CD4-positive, alpha-beta memory T cell (primary cell): ENCODE measurements at regions of chr14 and their contacts with region 1.

Region 1: DNA sequence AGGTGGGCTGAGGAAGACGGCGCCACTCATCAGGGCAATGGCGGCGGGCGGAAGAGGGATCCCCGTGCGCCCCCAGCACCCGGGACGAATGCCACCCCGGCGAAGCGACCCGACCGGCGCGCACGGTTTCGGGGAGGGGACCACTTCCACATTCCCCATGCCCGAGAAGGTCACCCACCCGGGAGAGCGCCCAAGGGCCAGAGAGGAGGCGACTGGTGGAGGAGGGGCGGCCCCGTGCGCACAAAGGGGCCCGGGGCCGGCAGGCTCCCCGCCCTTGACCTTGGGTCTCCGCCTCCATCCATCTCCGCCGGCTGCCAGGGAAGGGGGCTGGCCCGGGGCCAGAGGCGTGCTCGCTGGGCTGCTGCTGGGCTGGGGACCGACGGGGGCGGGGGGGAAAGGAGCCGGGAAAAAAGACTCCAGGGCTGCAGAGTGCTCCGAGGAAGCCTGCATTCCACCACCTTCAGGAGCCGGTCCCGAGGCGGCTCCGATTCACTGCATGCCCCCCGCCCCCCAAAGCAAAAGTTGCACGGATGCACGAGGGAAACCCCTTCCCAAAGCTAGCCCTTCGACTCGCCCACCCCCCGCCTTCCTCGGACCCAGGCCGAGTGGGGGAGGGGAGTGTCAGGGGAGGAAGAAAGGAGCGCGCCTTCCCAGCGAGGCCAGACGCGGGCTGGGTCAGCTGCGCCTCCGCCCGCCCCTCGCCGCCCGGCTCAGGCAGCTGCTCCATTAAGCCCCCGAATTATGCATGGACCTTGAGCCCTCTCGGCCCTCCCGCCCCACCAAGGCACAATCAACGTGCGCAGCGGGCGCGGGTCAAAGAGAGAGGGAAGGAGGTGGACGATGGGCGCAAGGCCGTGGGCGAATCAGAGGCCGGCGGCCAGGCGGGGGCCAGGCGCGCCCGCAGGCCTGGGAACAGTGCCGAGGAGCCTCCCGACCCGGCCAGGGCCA is 26.2 kb downstream of the BCL11B start:
- DNase-seq: peak in 1 of 5 donors; percentile 35
- H3K4me3 ChIP-seq: peak overlapping the region in 1 of 2 donors; percentile 60
- H3K4me3 Mint-ChIP-seq: peak overlapping the region; percentile 86 to 99 (median 90)
- H3K27ac ChIP-seq: peak overlapping the region; percentile 98
- H3K27ac Mint-ChIP-seq: peak overlapping the region; percentile 98 to 99 (median 99)
- H3K4me1 ChIP-seq: peaks cover 91% of the 10 kb centered on the region
- H3K4me1 Mint-ChIP-seq: peaks cover 63 to 89% (median 78%) of the 10 kb centered on the region in 4 donors
- H3K27me3 ChIP-seq: no peaks in the 10 kb centered on the region
- H3K27me3 Mint-ChIP-seq: no peaks in the 10 kb centered on the region

Region 2: DNA sequence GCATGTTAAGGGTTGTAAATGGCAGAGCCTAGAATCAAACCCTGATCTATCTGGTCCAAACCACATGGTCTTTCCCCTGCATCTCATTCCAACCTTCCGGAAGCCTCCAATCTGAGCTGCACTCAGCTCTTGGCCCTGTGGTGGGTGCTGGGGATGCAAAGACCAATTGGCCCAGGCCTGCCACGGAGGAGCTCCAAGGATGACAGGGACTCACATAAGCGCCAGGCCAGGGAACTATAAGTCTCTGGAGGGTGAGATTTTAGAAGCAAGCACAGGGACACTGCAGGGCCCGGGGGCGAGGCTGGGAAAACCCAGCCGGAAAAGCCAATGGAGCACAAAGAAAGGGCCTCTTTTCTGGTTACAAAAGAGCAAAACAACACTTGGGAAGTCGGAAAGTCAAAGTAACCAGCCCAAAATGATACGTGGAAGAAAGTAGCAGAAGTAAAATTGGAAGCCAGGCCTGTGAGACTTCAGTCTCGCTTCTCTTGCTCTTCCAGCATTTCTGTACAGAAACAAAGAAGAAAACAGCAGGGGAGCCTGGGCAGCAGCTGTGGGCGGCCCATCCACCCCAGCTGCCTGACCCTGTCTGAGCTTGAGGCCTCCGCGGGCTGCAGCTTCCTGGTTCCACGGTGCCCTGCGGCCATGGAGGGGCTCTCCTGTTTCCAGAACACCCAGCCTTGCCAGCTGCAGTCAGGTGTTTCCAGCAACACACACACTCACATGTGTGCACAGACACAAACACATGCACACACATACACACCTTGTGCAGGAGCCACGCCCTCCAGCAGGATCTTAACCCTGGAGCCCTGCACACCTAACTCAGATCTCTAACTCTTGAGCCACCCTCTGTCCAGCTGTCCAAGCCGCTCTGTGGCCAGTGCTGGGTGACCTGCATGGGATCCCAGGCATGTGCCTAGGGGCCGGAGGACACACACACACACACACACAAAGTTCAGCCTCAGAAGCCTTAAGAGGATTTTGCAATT is 152.0 kb before region 1 on chr14:
- CTCF ChIA-PET with region 1: no interaction called
- POLR2A ChIA-PET with region 1: no interaction called
- intact Hi-C with region 1: no loop called
- DNase-seq: no peak
- H3K4me3 ChIP-seq: no peak overlapping the region
- H3K4me3 Mint-ChIP-seq: no peak overlapping the region
- H3K27ac ChIP-seq: no peak overlapping the region
- H3K27ac Mint-ChIP-seq: no peak overlapping the region
- H3K4me1 ChIP-seq: no peaks in the 10 kb centered on the region
- H3K4me1 Mint-ChIP-seq: no peaks in the 10 kb centered on the region
- H3K27me3 ChIP-seq: no peaks in the 10 kb centered on the region
- H3K27me3 Mint-ChIP-seq: no peaks in the 10 kb centered on the region

Region 3: DNA sequence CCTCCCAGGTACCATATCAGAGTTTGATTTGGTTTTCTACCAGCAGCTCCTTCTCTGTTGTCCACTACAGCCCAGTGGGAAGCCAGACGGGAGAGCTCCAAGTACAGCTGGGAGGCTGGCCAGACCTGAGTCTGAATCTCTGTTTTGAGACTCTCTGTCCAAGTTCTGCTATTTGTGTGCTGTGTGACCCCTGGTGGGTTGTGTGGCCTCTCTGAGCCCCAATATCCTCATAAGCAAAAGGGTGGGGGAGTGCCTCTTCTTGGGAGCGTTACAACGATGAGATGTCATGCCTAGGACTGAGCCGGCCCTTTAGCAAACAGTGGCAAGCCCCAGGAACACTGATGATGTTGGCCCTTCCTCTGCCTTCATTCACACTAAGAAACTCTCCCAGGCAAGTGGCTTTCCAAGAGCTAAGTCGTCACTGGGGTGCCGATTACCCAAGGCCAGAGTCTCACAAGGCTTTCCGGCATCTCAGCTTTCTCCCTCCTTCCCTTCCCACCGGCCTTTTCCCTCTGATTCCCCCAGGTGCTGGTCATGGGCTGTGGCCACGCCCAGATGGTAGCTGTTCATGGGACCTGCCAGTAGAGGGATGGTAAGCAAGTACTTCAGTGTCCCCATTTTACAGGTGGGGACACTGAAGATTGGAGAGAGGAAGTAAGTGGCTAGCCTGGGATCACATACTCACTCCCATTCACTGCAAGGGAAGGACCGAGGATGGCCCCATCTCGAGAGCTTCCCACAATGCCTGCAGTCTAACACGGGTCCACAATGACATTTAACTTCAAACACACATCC is 21.5 kb before region 1 on chr14:
- CTCF ChIA-PET with region 1: interaction called, 16 read pairs
- POLR2A ChIA-PET with region 1: interaction called, 6,015 read pairs
- intact Hi-C with region 1: no loop called
- DNase-seq: no peak
- H3K4me3 ChIP-seq: no peak overlapping the region
- H3K4me3 Mint-ChIP-seq: peak overlapping the region; percentile 56 to 94 (median 66)
- H3K27ac ChIP-seq: peak overlapping the region; percentile 98
- H3K27ac Mint-ChIP-seq: peak overlapping the region; percentile 94 to 99 (median 99)
- H3K4me1 ChIP-seq: peaks cover 97% of the 10 kb centered on the region
- H3K4me1 Mint-ChIP-seq: peaks cover 81 to 98% (median 92%) of the 10 kb centered on the region in 4 donors
- H3K27me3 ChIP-seq: no peaks in the 10 kb centered on the region
- H3K27me3 Mint-ChIP-seq: no peaks in the 10 kb centered on the region

Region 4: GRCh38 chr14:99230208-99231151 is 15.4 kb before region 1 on chr14:
- CTCF ChIA-PET with region 1: interaction called, 39 read pairs
- POLR2A ChIA-PET with region 1: interaction called, 6,015 read pairs
- intact Hi-C with region 1: loop called (anchors 1 kb)
- DNase-seq: peak; percentile 88 to 95 (median 90)
- H3K4me3 ChIP-seq: peak overlapping the region in 1 of 2 donors; percentile 13
- H3K4me3 Mint-ChIP-seq: peak overlapping the region; percentile 56 to 94 (median 80)
- H3K27ac ChIP-seq: peak overlapping the region; percentile 98
- H3K27ac Mint-ChIP-seq: peak overlapping the region; percentile 98 to 99 (median 99)
- H3K4me1 ChIP-seq: peaks cover 100% of the 10 kb centered on the region
- H3K4me1 Mint-ChIP-seq: peaks cover 78 to 98% (median 89%) of the 10 kb centered on the region in 4 donors
- H3K27me3 ChIP-seq: no peaks in the 10 kb centered on the region
- H3K27me3 Mint-ChIP-seq: no peaks in the 10 kb centered on the region